Activated CD8-positive, alpha-beta T cell treated with anti-CD3 and anti-CD28 coated beads for 36 hours (primary cell): ENCODE measurements at regions of chr15 and their contacts with region 1.

Region 1: GRCh38 chr15:91522663-91523332 is 330.7 kb upstream of the SLCO3A1 start:
- DNase-seq: no peak
- ATAC-seq: no peak
- H3K4me3 Mint-ChIP-seq: no peak overlapping the region
- H3K27ac Mint-ChIP-seq: no peak overlapping the region
- H3K4me1 Mint-ChIP-seq: peaks cover 4% of the 10 kb centered on the region
- H3K27me3 Mint-ChIP-seq: peaks cover 5% of the 10 kb centered on the region
- CTCF ChIP-seq: peak; percentile 32

Region 2: GRCh38 chr15:91302588-91303439 is 220.0 kb before region 1 on chr15:
- CTCF ChIA-PET with region 1: interaction called, 5 read pairs
- POLR2A ChIA-PET with region 1: no interaction called
- intact Hi-C with region 1: loop called (anchors 5 kb)
- DNase-seq: no peak
- ATAC-seq: peak; percentile 49
- H3K4me3 Mint-ChIP-seq: no peak overlapping the region
- H3K27ac Mint-ChIP-seq: no peak overlapping the region
- H3K4me1 Mint-ChIP-seq: peaks cover 3% of the 10 kb centered on the region
- H3K27me3 Mint-ChIP-seq: peaks cover 10% of the 10 kb centered on the region
- CTCF ChIP-seq: peak; percentile 87